Heart left ventricle (tissue), 16 donors: ENCODE measurements at regions of chr13 and their contacts with region 1.

Region 1: GRCh38 chr13:75372517-75372916 is 109.5 kb downstream of the TBC1D4 start:
- DNase-seq: peak in 1 of 5 donors; percentile 25
- ATAC-seq: peak in 2 of 4 donors; percentile 38 to 47
- H3K4me3 ChIP-seq: peak overlapping the region in 1 of 12 donors; percentile 9
- H3K27ac ChIP-seq: peak overlapping the region; percentile 2 to 71 (median 58)
- H3K4me1 ChIP-seq: peaks cover 4 to 51% (median 25%) of the 10 kb centered on the region in 12 donors
- H3K27me3 ChIP-seq: no peaks in the 10 kb centered on the region
- CTCF ChIP-seq: peak; percentile 64 to 87 (median 76)
- POLR2A ChIP-seq: no peak

Region 2: DNA sequence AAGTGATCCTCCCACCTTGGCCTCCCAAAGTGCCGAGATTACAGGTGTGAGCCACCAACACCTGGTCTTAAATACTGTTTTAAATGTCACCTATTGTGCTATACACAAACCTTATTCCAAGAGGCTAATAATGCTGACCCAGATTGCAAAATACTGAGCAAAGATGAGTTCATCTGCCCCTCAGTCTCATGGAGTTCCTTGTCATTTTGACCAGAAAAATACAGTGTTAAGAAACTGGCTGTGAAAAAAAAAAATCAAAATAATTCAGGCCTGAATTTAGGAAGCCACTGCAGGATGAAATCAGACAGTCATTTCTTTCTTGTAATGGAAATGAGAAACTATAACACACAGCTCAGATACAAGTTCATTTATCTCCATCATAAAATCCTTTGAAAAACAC is 49.5 kb after region 1 on chr13:
- intact Hi-C with region 1: loop called in 1 of 10 experiments (anchors 5 kb)
- DNase-seq: no peak
- ATAC-seq: no peak
- H3K4me3 ChIP-seq: no peak overlapping the region
- H3K27ac ChIP-seq: no peak overlapping the region
- H3K4me1 ChIP-seq: peaks cover 0 to 69% (median 34%) of the 10 kb centered on the region in 12 donors
- H3K27me3 ChIP-seq: no peaks in the 10 kb centered on the region
- CTCF ChIP-seq: no peak
- POLR2A ChIP-seq: no peak

Region 3: DNA sequence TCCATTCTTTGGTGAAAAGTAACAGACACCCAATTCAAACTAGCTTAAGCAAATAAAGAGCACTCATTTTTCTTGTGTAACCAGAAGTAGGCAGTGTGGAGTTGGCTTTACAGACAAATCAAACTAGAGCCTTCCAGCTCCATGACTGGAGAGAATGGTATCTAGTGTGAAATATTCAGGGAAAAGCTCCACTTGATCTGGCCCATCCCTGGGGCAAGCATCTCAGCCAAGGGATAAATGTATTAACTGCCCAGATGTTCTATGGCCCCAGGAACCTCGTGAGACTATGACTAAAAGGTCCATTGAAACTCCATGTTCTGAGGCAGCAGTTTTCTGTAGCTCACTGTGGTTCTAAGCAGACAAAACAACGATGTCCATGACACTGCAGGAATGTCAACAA is 59.5 kb after region 1 on chr13:
- intact Hi-C with region 1: no loop called
- DNase-seq: no peak
- ATAC-seq: peak in 3 of 4 donors; percentile 16 to 35 (median 33)
- H3K4me3 ChIP-seq: no peak overlapping the region
- H3K27ac ChIP-seq: peak overlapping the region in 8 of 12 donors; percentile 11 to 50 (median 25)
- H3K4me1 ChIP-seq: peaks cover 0 to 49% (median 19%) of the 10 kb centered on the region in 12 donors
- H3K27me3 ChIP-seq: no peaks in the 10 kb centered on the region
- CTCF ChIP-seq: peak in 1 of 12 donors; percentile 23
- POLR2A ChIP-seq: no peak

Region 4: DNA sequence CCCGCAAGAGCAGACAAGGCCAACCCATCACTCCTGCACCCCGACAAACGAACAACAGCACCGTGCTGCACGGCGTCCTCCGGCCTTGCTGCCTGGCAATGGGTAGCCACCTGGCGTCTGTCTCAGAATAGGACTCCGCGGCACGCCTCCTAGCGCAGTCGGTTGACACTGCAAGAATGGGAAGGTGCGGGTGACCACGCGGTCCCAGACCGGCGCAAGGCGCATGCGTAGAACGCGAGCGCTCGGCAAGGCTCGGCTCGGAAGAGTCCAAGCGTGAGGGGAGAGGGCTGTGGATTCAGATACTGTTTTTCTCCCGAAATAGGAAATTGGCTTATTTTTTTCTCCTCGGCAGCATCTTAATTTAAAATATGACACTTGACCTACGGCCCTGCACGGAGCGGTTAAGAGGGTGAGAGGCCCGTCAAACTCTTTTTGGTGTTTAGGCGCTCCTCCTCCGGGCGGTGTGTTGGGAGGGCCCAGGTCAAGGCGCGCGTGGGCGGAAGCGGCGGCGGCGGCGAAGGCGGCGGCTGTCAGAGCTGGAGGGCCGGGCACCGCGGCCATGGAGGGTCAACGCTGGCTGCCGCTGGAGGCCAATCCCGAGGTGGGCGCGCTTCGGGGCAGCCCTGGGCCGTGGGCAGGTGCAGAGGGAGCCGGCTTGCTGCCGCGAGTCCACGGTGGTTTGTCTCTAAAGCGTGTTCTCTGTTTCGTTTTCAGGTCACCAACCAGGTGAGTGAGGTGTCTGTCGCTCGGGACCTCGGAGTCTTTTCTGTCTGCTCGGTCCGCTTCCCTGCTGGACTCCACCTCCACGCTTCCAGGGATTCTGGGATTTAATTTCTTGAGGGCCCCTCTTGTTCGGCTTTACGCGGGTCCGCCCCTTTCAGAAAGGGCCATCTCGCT is 177.0 kb after region 1 on chr13 and contains the start of gene UCHL3:
- intact Hi-C with region 1: loop called in 9 of 10 experiments (anchors 5 to 10 kb)
- DNase-seq: peak; percentile 95 to 99 (median 97)
- ATAC-seq: peak; percentile 96 to 99 (median 98)
- H3K4me3 ChIP-seq: peak within 1 kb of the TSS; percentile 61 to 99 (median 87)
- H3K27ac ChIP-seq: peak within 1 kb of the TSS; percentile 64 to 95 (median 84)
- H3K4me1 ChIP-seq: peaks cover 0 to 16% (median 10%) of the 10 kb centered on the region in 12 donors
- H3K27me3 ChIP-seq: no peaks in the 10 kb centered on the region
- CTCF ChIP-seq: peak; percentile 74 to 99 (median 87)
- POLR2A ChIP-seq: peak in 1 of 2 donors; percentile 68
- total RNA-seq, gene UCHL3: 16.3 to 52.8 (median 27.6) TPM